Heart right ventricle (tissue), 16 donors: ENCODE measurements at regions of chr6 and their contacts with region 1.

Region 1: DNA sequence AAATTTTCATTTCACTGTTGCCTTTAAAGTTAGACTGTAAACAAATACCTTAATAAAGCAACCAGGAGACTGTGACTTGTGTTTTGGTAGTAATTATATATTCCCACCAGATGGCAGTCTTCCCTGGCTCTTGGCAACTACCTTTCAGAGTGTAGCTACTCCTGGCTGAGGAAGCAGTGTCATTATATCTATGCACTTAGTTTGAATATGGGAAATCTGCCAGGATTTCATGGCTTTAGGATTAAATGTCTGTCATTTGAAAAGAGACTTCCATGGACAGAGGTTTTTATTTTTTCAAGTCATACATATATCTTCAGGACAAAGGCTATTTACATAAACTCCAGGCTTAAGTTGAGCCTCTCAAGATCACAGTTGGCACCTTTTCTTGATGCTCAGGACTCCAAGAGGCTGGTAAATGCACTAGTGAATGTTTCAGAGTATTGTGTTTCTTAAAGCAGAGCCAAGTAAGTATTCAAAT is 160.1 kb downstream of the C6orf58 start:
- DNase-seq: peak in 1 of 2 donors; percentile 41
- ATAC-seq: peak; percentile 58 to 76 (median 67)
- H3K4me3 ChIP-seq: no peak overlapping the region
- H3K27ac ChIP-seq: no peak overlapping the region
- H3K4me1 ChIP-seq: no peaks in the 10 kb centered on the region
- H3K27me3 ChIP-seq: no peaks in the 10 kb centered on the region
- CTCF ChIP-seq: peak in 8 of 9 donors; percentile 35 to 76 (median 70)

Region 2: DNA sequence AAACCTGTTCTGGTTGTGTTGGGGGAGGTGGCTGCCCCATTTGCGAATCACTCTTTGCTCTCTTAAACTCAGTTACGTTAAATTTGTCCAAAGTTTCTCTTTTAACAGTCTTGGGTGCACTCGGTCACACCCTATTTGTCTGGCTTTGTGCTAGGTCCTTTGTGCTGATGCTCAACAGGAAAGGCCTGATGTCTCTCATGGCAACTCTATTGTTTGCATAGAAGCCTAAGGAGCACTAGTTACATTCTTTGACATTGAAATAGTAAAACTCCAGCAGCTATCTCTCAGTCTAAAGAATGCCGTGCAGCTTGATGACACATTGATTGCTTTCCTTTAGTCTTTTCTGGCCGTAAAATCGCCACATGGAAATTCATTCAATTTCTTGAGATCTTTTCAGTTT is 1645.5 kb before region 1 on chr6:
- intact Hi-C with region 1: loop called in 1 of 10 experiments (anchors 5 kb)
- DNase-seq: no peak
- ATAC-seq: peak in 1 of 8 donors; percentile 35
- H3K4me3 ChIP-seq: no peak overlapping the region
- H3K27ac ChIP-seq: no peak overlapping the region
- H3K4me1 ChIP-seq: no peaks in the 10 kb centered on the region
- H3K27me3 ChIP-seq: peaks cover 0 to 11% (median 0%) of the 10 kb centered on the region in 7 donors
- CTCF ChIP-seq: no peak

Region 3: DNA sequence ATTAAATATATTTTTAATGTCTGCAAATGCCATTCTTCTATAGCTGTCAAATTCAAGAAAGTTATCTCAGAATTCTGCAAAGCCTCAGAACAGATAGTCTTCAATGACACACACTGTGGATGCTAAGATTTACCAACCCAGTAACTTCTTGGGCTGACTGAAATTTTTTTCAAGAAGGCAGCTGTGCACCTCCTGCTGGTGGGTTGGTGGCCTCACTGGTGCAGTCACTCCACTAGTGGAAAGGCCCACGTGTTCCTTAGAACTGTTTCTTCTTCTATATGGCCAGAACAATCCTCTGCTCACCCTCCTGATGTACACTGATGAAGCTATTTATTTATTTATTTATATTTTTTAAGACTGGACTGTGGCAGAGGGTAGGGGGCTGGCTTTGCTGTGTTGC is 189.8 kb before region 1 on chr6:
- intact Hi-C with region 1: no loop called
- DNase-seq: no peak
- ATAC-seq: no peak
- H3K4me3 ChIP-seq: no peak overlapping the region
- H3K27ac ChIP-seq: no peak overlapping the region
- H3K4me1 ChIP-seq: no peaks in the 10 kb centered on the region
- H3K27me3 ChIP-seq: peaks cover 0 to 16% (median 11%) of the 10 kb centered on the region in 7 donors
- CTCF ChIP-seq: peak in 4 of 9 donors; percentile 10 to 25 (median 16)

Region 4: DNA sequence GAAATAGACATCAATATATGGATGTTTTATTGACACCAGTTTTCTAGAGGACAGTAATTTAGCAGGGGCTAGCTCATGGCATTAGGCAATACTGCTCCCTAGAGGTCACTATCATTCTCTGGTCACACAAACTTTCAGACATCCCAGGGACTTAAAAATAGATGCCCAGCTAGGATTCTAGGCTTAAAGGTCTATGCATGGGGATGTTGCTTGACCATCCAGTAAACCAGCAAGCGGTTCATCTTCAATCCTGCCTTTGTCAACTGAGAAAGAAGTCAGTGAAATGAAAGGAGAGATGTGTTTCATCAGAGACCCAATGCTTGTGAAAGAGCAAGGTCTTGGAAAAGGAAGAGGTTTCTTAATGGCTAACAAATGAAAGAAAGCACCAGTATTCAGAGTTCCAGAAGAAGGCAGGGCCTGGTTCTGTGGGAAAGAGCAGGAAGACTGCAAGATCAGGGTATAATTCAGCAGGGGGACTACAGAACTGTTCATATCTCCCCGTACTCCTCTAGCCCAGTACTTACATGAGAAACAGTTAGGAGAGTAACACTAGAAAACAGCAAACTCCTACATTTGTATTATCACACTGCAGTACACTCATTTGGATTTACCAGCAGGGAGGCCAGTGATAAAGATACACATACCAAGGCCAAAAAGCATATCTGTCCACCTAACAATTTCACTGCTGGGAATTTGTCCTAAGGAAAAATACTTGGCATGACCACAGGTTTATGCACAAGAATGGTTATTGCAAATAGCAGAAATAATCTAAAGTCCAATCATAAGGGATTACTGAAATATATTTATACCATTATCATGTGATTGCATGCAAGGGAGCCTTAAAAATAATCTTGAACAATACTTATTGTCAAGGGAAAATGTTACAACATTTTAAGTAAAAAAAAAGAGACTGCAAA is 994.5 kb after region 1 on chr6:
- intact Hi-C with region 1: loop called in 8 of 10 experiments (anchors 2 to 10 kb)
- DNase-seq: no peak
- ATAC-seq: peak; percentile 47 to 87 (median 76)
- H3K4me3 ChIP-seq: no peak overlapping the region
- H3K27ac ChIP-seq: no peak overlapping the region
- H3K4me1 ChIP-seq: peaks cover 0 to 9% (median 0%) of the 10 kb centered on the region in 9 donors
- H3K27me3 ChIP-seq: no peaks in the 10 kb centered on the region
- CTCF ChIP-seq: peak; percentile 40 to 72 (median 63)